ENCODE measurements at regions of chr5 and their contacts with region 1.

Region 1: DNA sequence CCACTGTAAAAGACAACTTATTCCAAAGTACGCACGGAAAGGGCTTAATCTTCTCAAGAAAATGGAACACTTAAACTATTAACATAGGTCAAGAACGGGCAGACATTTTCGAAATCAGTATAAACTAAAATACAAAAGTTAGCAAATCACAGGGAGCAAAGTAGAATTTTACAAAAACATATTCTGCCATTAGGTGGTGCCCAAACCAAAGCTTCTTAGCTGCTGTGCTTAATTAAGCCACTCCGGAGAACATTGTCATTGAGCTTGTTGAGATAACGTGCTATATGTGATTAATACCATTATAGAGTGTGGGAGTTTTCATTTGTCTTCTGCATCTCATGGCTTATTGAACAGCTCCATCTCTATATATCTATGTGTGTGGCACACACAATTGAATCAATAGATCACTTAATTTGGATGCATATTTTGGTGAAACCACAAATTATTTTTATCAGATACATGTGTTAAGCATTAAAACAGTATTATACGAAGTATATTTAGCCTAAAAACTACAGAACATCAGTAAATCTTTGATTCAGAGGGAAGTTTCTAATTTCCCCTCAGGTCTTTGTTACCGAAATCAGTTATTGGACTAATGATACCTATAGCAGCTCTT is 23.4 kb downstream of the UBLCP1 start:
- DNase-seq: no peak
- H3K4me3 Mint-ChIP-seq: no peak overlapping the region
- H3K27ac Mint-ChIP-seq: no peak overlapping the region
- H3K4me1 Mint-ChIP-seq: no peaks in the 10 kb centered on the region
- H3K27me3 Mint-ChIP-seq: no peaks in the 10 kb centered on the region

Region 2: GRCh38 chr5:158074992-158075769 is 1211.3 kb before region 1 on chr5:
- CTCF ChIA-PET with region 1: no interaction called
- intact Hi-C with region 1: no loop called
- DNase-seq: peak; percentile 63
- H3K4me3 Mint-ChIP-seq: no peak overlapping the region
- H3K27ac Mint-ChIP-seq: no peak overlapping the region
- H3K4me1 Mint-ChIP-seq: peaks cover 3% of the 10 kb centered on the region
- H3K27me3 Mint-ChIP-seq: peaks cover 2% of the 10 kb centered on the region

Region 3: DNA sequence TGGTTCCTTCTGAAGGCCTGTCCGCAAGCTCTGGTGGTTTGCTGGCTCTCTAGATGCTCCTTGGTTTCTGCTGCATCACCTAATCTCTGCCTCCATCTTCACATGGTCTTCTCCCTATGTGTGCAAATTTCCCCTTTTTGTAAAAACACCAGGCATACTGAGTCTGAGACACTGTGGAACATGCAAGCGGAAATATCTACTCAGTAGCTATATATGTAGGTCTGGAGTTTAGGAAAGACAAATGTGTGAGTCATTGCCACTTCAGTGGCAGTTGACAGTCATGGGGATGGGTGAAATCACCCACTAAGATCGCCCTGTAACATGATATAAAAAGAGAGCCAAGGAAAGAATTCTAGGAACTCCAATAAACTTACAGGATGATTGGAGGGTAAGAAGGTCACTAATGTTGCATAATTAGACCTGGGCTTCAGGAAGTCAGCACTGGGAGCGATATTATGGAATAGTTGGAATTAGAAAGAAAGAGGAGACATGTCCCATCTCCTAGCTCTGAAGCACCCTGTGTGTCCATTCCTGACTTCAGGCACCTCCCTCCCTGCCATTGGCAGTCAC is 46.1 kb before region 1 on chr5:
- CTCF ChIA-PET with region 1: no interaction called
- intact Hi-C with region 1: no loop called
- DNase-seq: peak; percentile 24
- H3K4me3 Mint-ChIP-seq: no peak overlapping the region
- H3K27ac Mint-ChIP-seq: peak overlapping the region; percentile 55
- H3K4me1 Mint-ChIP-seq: peaks cover 44% of the 10 kb centered on the region
- H3K27me3 Mint-ChIP-seq: no peaks in the 10 kb centered on the region

Region 4: DNA sequence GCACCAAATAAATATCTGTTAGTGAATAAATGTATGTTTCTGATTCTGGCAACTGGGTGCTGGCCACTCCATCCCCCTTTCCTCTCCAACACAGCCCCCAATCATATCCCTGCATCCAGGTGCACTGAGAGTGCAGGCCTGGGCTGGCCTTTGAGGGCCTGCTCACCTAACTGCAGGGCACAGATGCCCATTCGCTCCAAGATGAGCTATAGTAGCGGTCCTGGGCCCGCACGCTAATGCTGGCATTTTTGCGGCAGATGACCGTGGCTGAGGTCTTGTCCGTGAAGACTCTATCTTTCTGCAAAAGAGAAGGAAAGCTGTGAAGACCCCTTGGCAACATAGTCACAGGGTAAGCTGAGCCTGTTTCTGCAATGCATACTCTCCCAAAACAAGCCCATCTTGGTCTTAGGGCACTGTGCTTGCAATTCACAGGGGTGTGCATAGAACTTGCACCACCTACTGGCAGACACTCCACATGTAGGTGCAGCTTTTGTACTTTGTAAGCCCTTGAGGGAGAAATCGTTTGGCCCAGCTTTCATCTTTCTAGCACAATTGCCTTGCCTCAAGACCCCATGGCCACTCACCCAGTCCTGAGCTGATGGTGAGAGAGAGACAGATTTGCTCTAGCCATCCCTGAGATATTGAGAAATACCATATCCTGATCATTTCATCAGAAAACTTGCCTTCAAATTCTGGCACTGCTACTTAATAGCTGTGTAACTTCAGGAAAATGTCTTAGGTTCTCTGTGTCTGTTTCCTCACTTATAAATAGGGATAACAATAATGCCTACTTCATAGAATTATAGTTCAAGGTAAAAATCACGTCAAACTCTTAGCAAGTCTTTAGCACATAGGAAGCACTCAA is 30.2 kb after region 1 on chr5:
- CTCF ChIA-PET with region 1: interaction called, 5 read pairs
- intact Hi-C with region 1: loop called (anchors 2 kb)
- DNase-seq: peak; percentile 73
- H3K4me3 Mint-ChIP-seq: no peak overlapping the region
- H3K27ac Mint-ChIP-seq: no peak overlapping the region
- H3K4me1 Mint-ChIP-seq: no peaks in the 10 kb centered on the region
- H3K27me3 Mint-ChIP-seq: no peaks in the 10 kb centered on the region

Region 5: GRCh38 chr5:159518366-159518765 is 231.8 kb after region 1 on chr5:
- CTCF ChIA-PET with region 1: no interaction called
- intact Hi-C with region 1: no loop called
- DNase-seq: no peak
- H3K4me3 Mint-ChIP-seq: no peak overlapping the region
- H3K27ac Mint-ChIP-seq: no peak overlapping the region
- H3K4me1 Mint-ChIP-seq: peaks cover 9% of the 10 kb centered on the region
- H3K27me3 Mint-ChIP-seq: peaks cover 4% of the 10 kb centered on the region

Region 6: GRCh38 chr5:159915904-159916840 is 629.6 kb after region 1 on chr5 and contains the start of gene ADRA1B:
- CTCF ChIA-PET with region 1: interaction called, 3 read pairs
- intact Hi-C with region 1: loop called (anchors 1 kb)
- DNase-seq: peak; percentile 66
- H3K4me3 Mint-ChIP-seq: peak within 1 kb of the TSS; percentile 36
- H3K27ac Mint-ChIP-seq: no peak within 1 kb of the TSS
- H3K4me1 Mint-ChIP-seq: peaks cover 6% of the 10 kb centered on the region
- H3K27me3 Mint-ChIP-seq: peaks cover 44% of the 10 kb centered on the region
- total RNA-seq, gene ADRA1B: not detected

Region 7: GRCh38 chr5:159965031-159965837 is 678.7 kb after region 1 on chr5:
- CTCF ChIA-PET with region 1: no interaction called
- intact Hi-C with region 1: loop called (anchors 2 kb)
- DNase-seq: peak; percentile 55
- H3K4me3 Mint-ChIP-seq: no peak overlapping the region
- H3K27ac Mint-ChIP-seq: no peak overlapping the region
- H3K4me1 Mint-ChIP-seq: no peaks in the 10 kb centered on the region
- H3K27me3 Mint-ChIP-seq: peaks cover 28% of the 10 kb centered on the region

Region 8: GRCh38 chr5:159987031-159987674 is 700.6 kb after region 1 on chr5:
- CTCF ChIA-PET with region 1: interaction called, 6 read pairs
- intact Hi-C with region 1: loop called (anchors 2 kb)
- DNase-seq: peak; percentile 83
- H3K4me3 Mint-ChIP-seq: peak overlapping the region; percentile 56
- H3K27ac Mint-ChIP-seq: no peak overlapping the region
- H3K4me1 Mint-ChIP-seq: no peaks in the 10 kb centered on the region
- H3K27me3 Mint-ChIP-seq: peaks cover 20% of the 10 kb centered on the region

Measured in activated naive CD4-positive, alpha-beta T cell treated with anti-CD3 and anti-CD28 coated beads for 36 hours (primary cell).